CD14-positive monocyte (primary cell): ENCODE measurements at regions of chr10 and their contacts with region 1.

Region 1: GRCh38 chr10:68735119-68735518 is 14.1 kb downstream of the CCAR1 start:
- DNase-seq: no peak
- H3K4me3 ChIP-seq: no peak overlapping the region
- H3K4me3 Mint-ChIP-seq: no peak overlapping the region
- H3K27ac ChIP-seq: no peak overlapping the region
- H3K27ac Mint-ChIP-seq: peak overlapping the region in 4 of 7 donors; percentile 21 to 80 (median 56)
- H3K4me1 ChIP-seq: no peaks in the 10 kb centered on the region
- H3K4me1 Mint-ChIP-seq: no peaks in the 10 kb centered on the region
- H3K27me3 ChIP-seq: no peaks in the 10 kb centered on the region
- H3K27me3 Mint-ChIP-seq: no peaks in the 10 kb centered on the region
- CTCF ChIP-seq: no peak

Region 2: DNA sequence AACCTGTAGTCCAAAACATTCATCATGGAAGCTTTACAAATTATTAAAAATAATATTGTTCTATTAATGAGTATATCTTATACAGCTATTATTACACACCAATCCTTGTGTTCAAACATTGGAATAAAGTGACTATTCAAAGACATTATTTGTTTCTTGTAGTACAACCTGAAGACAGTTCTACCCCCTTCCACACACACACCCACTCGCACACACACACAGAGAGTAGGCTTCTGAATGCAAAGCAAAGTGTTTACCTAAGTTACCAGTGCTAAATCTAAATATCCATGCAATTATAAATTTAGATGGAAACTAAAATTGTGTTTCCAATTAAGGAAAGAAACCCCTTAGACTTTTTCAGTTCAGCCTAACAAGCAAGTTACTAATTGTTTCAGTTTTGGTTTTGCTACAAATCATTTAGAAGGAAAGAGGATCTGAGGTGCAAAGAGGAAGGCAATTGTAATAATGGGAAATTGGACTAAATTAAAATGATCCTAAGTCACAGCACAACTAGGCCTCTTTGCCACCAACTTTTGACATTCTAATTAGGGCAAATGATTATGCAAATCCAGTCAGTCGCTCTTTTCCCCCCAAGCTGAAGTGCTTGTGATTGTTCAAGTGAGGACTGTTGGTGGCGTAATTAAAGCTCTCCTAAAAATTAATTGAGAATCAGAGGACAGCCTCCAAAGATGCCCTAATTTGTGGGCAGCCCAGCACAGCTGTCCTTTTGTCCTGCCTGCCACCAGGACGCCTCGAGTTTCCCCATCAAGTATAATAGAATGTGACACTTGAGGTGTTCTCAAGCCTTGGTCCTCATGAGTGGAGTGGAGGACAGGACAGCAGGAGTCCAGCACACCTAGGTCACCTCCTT is 483.3 kb before region 1 on chr10:
- intact Hi-C with region 1: no loop called
- DNase-seq: no peak
- H3K4me3 ChIP-seq: no peak overlapping the region
- H3K4me3 Mint-ChIP-seq: no peak overlapping the region
- H3K27ac ChIP-seq: peak overlapping the region in 1 of 2 donors; percentile 13
- H3K27ac Mint-ChIP-seq: peak overlapping the region in 1 of 7 donors; percentile 26
- H3K4me1 ChIP-seq: no peaks in the 10 kb centered on the region
- H3K4me1 Mint-ChIP-seq: peaks cover 7% of the 10 kb centered on the region
- H3K27me3 ChIP-seq: no peaks in the 10 kb centered on the region
- H3K27me3 Mint-ChIP-seq: peaks cover 0 to 2% (median 0%) of the 10 kb centered on the region in 3 donors
- CTCF ChIP-seq: no peak

Region 3: GRCh38 chr10:68787813-68788212 is 52.7 kb after region 1 on chr10:
- intact Hi-C with region 1: loop called in 1 of 2 experiments (anchors 5 kb)
- DNase-seq: no peak
- H3K4me3 ChIP-seq: no peak overlapping the region
- H3K4me3 Mint-ChIP-seq: no peak overlapping the region
- H3K27ac ChIP-seq: no peak overlapping the region
- H3K27ac Mint-ChIP-seq: no peak overlapping the region
- H3K4me1 ChIP-seq: no peaks in the 10 kb centered on the region
- H3K4me1 Mint-ChIP-seq: no peaks in the 10 kb centered on the region
- H3K27me3 ChIP-seq: no peaks in the 10 kb centered on the region
- H3K27me3 Mint-ChIP-seq: no peaks in the 10 kb centered on the region
- CTCF ChIP-seq: no peak